ENCODE measurements at regions of chr1 and their contacts with region 1.

Region 1: DNA sequence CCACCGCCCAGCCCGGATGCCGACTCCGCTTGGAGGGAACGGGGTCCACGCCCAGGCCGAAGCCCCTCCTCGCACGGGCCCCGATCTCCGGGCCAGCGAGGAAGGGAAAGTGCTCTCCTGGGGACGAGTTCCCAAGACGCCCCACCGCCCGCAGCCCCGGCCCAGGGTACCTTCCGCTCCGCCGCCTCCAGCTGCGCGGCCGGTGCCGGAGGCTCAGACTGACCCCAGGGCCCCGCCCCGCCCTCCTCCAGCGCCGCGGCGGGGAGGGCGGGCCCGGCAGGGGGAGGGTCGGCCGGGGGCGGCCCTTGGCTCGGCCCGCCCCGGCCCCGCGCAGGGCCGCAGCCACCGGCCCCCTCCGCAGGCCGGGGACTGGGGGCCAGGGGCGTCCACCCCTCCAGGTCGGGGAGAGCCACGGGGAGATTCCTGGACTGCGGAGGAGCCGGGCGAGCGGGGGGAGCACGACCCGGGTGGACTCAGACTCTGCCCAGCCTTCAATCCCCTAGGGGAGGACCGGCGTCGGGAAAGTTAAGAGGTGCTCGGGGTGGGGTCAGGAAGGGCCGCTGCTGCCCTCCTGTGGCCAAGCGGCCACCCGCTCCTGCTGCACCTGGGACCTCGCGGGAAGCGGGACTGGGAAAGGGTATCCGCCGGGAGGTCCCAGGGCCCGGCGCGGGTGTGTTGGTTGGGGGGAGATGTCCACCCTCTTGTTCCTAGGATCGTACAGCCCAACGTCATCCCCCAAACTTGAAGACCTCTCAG is at the start of gene RHOC:
- DNase-seq: peak; percentile 57 to 86 (median 70)
- H3K4me3 ChIP-seq: peak within 1 kb of the TSS; percentile 50 to 85 (median 73)
- H3K27ac ChIP-seq: peak within 1 kb of the TSS in 58 of 59 donors; percentile 37 to 96 (median 87)
- H3K27me3 ChIP-seq: no peaks in the 10 kb centered on the region
- CTCF ChIP-seq: peak; percentile 49 to 95 (median 88)
- total RNA-seq, gene RHOC: 36.8 to 162 (median 72.5) TPM

Region 2: DNA sequence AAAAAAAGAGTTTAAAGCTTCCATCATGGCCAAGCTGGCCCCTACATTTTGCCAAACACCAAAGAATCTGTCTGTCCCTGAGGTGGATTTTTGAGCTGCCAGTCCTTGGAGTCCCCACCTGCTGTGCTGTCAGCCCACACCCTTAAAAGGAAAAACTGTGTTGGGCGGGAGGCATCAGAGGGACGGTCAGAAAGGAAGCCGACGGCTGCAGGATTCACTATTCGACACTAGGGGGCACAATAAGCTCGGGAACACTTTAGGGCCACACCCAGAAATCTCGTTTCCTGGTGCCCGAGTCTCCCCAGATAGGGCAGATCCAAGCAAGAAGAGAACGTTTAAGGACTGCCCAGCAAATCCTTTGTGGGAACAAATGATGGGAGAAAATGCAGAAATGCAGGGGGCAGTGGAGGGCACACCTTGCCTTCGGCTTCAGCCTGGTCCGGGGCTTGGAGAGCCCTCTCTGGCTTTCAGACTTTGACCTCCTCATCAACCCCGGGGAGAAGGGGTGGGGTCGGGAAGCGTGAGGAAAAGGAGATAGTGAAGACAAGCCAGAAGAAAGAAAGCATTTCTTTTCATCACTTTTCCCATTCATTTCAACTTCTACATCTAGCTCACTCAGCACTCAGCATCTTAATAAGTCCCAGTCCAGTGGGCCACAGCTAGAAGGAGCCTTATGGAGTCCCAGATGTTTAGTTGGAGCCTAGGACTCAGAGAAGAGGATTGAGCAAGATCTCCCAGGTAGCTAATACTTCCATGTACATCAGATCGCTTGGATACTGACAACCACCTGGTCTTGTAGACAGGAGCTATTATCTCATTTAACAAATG is 316.1 kb before region 1 on chr1:
- intact Hi-C with region 1: loop called (anchors 2 to 5 kb)
- DNase-seq: peak; percentile 67 to 93 (median 88)
- H3K4me3 ChIP-seq: peak overlapping the region; percentile 24 to 70 (median 53)
- H3K27ac ChIP-seq: peak overlapping the region in 57 of 59 donors; percentile 7 to 93 (median 75)
- H3K27me3 ChIP-seq: no peaks in the 10 kb centered on the region
- CTCF ChIP-seq: peak; percentile 69 to 99 (median 94)

Region 3: GRCh38 chr1:112395821-112396652 is 311.0 kb before region 1 on chr1 and contains the start of gene CTTNBP2NL:
- intact Hi-C with region 1: loop called (anchors 2 to 5 kb)
- DNase-seq: peak; percentile 92 to 98 (median 98)
- H3K4me3 ChIP-seq: peak within 1 kb of the TSS; percentile 72 to 100 (median 95)
- H3K27ac ChIP-seq: peak within 1 kb of the TSS; percentile 3 to 98 (median 88)
- H3K27me3 ChIP-seq: no peaks in the 10 kb centered on the region
- CTCF ChIP-seq: peak in 36 of 56 donors; percentile 9 to 61 (median 32)
- total RNA-seq, gene CTTNBP2NL: 24.0 to 48.1 (median 32.7) TPM

Region 4: GRCh38 chr1:112501810-112502641 is 205.1 kb before region 1 on chr1:
- intact Hi-C with region 1: loop called (anchors 1 to 5 kb)
- DNase-seq: peak; percentile 60 to 86 (median 80)
- H3K4me3 ChIP-seq: peak overlapping the region; percentile 47 to 87 (median 72)
- H3K27ac ChIP-seq: peak overlapping the region in 44 of 59 donors; percentile 3 to 87 (median 62)
- H3K27me3 ChIP-seq: no peaks in the 10 kb centered on the region
- CTCF ChIP-seq: peak in 55 of 56 donors; percentile 45 to 81 (median 68)

Region 5: GRCh38 chr1:112619520-112620376 is 87.3 kb before region 1 on chr1 and contains the start of gene CAPZA1:
- intact Hi-C with region 1: loop called (anchors 1 to 2 kb)
- DNase-seq: peak; percentile 85 to 95 (median 90)
- H3K4me3 ChIP-seq: peak within 1 kb of the TSS; percentile 69 to 100 (median 94)
- H3K27ac ChIP-seq: peak within 1 kb of the TSS; percentile 93 to 99 (median 98)
- H3K27me3 ChIP-seq: no peaks in the 10 kb centered on the region
- CTCF ChIP-seq: peak in 29 of 56 donors; percentile 7 to 43 (median 23)
- total RNA-seq, gene CAPZA1: 42.9 to 101 (median 68.4) TPM

Region 6: GRCh38 chr1:112637254-112638116 is 69.6 kb before region 1 on chr1:
- intact Hi-C with region 1: loop called in 1 of 2 experiments (anchors 5 kb)
- DNase-seq: peak in 2 of 10 donors; percentile 37 to 57
- H3K4me3 ChIP-seq: peak overlapping the region in 3 of 59 donors; percentile 2 to 7 (median 5)
- H3K27ac ChIP-seq: peak overlapping the region; percentile 20 to 91 (median 78)
- H3K27me3 ChIP-seq: no peaks in the 10 kb centered on the region
- CTCF ChIP-seq: peak in 1 of 56 donors; percentile 9

Region 7: DNA sequence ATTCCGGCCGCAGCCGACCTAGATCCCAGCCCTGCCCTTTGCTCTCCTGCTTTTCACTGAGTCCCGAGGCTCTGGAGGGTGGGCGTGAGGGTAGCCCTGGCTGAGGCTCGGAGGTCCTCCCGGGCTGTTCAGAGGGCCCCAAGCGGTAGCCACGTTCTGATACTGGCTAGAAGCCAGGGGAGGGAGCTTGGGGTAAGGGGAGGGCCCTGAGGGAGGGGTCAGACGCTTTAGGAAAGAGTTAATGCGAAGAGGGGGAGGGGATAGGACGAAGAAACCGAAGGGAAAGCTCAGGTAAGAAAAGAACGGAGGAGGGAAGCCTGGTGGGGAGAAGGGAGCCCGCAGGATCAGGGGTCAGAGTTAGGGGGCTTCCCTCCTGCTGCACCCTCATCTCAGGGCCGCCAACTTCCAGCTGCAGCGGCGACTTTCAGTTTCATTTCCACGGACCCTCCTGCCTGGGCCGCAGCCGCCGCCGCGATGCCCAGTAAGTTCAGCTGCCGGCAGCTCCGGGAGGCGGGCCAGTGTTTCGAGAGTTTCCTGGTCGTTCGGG is 32.6 kb before region 1 on chr1 and contains the start of gene MOV10:
- intact Hi-C with region 1: loop called (anchors 2 kb)
- DNase-seq: peak in 7 of 10 donors; percentile 38 to 75 (median 52)
- H3K4me3 ChIP-seq: peak within 1 kb of the TSS; percentile 56 to 97 (median 83)
- H3K27ac ChIP-seq: peak within 1 kb of the TSS in 58 of 59 donors; percentile 34 to 95 (median 87)
- H3K27me3 ChIP-seq: no peaks in the 10 kb centered on the region
- CTCF ChIP-seq: peak in 1 of 56 donors; percentile 7
- total RNA-seq, gene MOV10: 12.5 to 54.5 (median 25.7) TPM

Measured in dorsolateral prefrontal cortex (tissue), 120 donors.